K562 (cell line): ENCODE measurements at regions of chr9 and their contacts with region 1.

Region 1: DNA sequence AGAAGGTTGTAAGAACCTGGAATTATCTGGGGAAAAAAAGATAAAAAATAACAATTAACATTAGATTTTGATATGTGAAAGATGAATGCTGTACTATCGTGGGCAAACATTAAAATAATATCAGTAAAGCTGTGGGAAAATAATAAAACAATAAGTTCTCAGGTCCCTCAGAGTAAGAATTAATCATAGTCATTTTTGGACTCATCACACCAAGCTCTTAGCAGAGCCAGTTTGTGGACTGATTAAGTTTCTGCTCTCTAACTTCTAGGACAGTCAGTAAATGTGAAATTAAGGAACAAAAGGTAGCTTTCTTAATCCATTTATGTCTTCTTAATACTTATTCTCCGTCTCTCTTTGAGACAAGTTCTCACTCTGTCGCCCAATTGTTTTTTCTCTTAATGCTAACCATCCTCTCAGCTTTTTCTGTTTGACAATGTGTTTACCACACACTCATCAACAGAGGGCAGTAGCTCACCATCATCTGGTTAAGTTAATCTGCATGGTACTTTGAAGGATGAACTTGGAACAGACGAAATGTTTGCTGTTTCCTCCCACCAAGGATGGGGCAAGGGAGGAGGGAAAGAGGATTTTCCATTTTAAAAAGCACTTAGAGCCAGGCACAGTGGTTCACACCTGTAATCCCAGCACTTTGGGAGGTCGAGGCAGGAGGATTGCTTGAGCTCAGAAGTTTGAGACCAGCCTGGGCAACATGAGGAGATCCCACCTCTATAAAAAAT is 5.3 kb upstream of the ACO1 start:
- DNase-seq: peak; percentile 34 to 72 (median 45)
- ATAC-seq: peak; percentile 86
- H3K4me3 ChIP-seq: no peak overlapping the region
- H3K27ac ChIP-seq: no peak overlapping the region
- H3K4me1 ChIP-seq: no peaks in the 10 kb centered on the region
- H3K27me3 ChIP-seq: no peaks in the 10 kb centered on the region
- CTCF ChIP-seq: peak; percentile 66 to 85 (median 75)
- EP300 ChIP-seq: no peak
- POLR2A ChIP-seq: no peak
- RAD21 ChIP-seq: peak; percentile 80 to 92

Region 2: GRCh38 chr9:32395490-32396216 is 16.5 kb after region 1 on chr9:
- CTCF ChIA-PET with region 1: no interaction called
- POLR2A ChIA-PET with region 1: no interaction called
- in situ Hi-C with region 1: no loop called
- intact Hi-C with region 1: no loop called
- DNase-seq: no peak
- ATAC-seq: 0 out of 3 replicates have a peak, but pooled peaks have one; percentile 27
- H3K4me3 ChIP-seq: no peak overlapping the region
- H3K27ac ChIP-seq: no peak overlapping the region
- H3K4me1 ChIP-seq: no peaks in the 10 kb centered on the region; a peak in 1 of 5 replicates
- H3K27me3 ChIP-seq: no peaks in the 10 kb centered on the region
- CTCF ChIP-seq: no peak
- EP300 ChIP-seq: no peak
- POLR2A ChIP-seq: no peak
- RAD21 ChIP-seq: no peak

Region 3: DNA sequence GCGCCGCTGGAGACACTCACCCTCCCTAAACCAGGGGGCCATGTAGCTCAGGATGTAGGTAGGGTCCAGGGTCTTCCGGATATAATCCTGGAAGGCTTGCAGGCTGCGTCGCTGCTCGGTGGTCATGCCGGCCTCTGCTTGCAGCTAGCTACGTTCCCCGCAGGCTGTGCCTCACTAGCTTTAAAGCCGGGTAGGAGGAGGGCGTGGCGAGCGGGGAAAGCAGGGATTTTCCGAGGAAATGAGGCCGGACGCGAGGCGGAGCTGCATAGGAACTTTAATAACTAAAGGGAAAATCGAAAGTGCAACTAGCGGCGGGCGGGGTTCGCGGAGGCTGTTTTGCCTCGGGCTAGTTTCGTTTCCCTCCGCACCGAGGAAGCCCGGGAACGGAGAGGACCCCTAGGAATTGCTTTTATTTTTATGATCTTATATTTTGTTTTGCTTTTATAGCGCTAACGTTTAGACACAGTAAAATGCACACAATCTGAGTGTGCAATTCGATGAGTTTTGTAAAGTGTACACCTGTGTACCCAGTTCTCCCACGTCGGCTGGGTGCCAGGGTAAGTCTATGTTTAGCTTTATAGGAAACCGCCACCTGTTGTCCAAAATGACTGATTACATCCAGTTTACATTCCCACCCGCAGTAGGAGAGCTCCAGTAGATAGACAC is 147.0 kb after region 1 on chr9 and contains the start of gene RIGI:
- CTCF ChIA-PET with region 1: interaction called, 17 read pairs
- POLR2A ChIA-PET with region 1: interaction called, 4 read pairs
- in situ Hi-C with region 1: no loop called
- intact Hi-C with region 1: loop called (anchors 1 kb)
- DNase-seq: peak; percentile 33 to 69 (median 44)
- ATAC-seq: peak; percentile 94
- H3K4me3 ChIP-seq: peak within 1 kb of the TSS; percentile 54
- H3K27ac ChIP-seq: peak within 1 kb of the TSS; percentile 33; the same call in 2 of the 3 replicates
- H3K4me1 ChIP-seq: peaks cover 0 to 4% of the 10 kb centered on the region in 2 experiments; a peak in 1 of 5 replicates
- H3K27me3 ChIP-seq: no peaks in the 10 kb centered on the region
- CTCF ChIP-seq: peak; percentile 31 to 55 (median 53); a peak in 5 of 6 replicates
- EP300 ChIP-seq: no peak
- POLR2A ChIP-seq: no peak
- RAD21 ChIP-seq: peak; percentile 24 to 52; a peak in 2 of 4 replicates
- polyA plus RNA-seq, gene RIGI: 0.32 to 0.36 TPM

Region 4: GRCh38 chr9:32571969-32572899 is 193.1 kb after region 1 on chr9:
- CTCF ChIA-PET with region 1: interaction called, 34 read pairs
- POLR2A ChIA-PET with region 1: interaction called, 4 read pairs
- in situ Hi-C with region 1: loop called (anchors 5 kb)
- intact Hi-C with region 1: no loop called
- DNase-seq: peak; percentile 59 to 82 (median 68)
- ATAC-seq: peak; percentile 97
- H3K4me3 ChIP-seq: peak overlapping the region; percentile 78
- H3K27ac ChIP-seq: peak overlapping the region; percentile 69
- H3K4me1 ChIP-seq: no peaks in the 10 kb centered on the region
- H3K27me3 ChIP-seq: no peaks in the 10 kb centered on the region
- CTCF ChIP-seq: peak; percentile 68 to 72 (median 72)
- EP300 ChIP-seq: no peak
- POLR2A ChIP-seq: no peak
- RAD21 ChIP-seq: peak; percentile 50 to 68

Region 5: GRCh38 chr9:32579706-32580331 is 200.7 kb after region 1 on chr9:
- CTCF ChIA-PET with region 1: interaction called, 93 read pairs
- POLR2A ChIA-PET with region 1: interaction called, 5 read pairs
- in situ Hi-C with region 1: loop called (anchors 5 kb)
- intact Hi-C with region 1: loop called (anchors 1 kb)
- DNase-seq: peak; percentile 27 to 60 (median 40)
- ATAC-seq: peak; percentile 59; the same call in 1 of the 3 replicates
- H3K4me3 ChIP-seq: no peak overlapping the region
- H3K27ac ChIP-seq: no peak overlapping the region
- H3K4me1 ChIP-seq: no peaks in the 10 kb centered on the region; a peak in 1 of 5 replicates
- H3K27me3 ChIP-seq: no peaks in the 10 kb centered on the region
- CTCF ChIP-seq: peak; percentile 71 to 84 (median 75)
- EP300 ChIP-seq: no peak
- POLR2A ChIP-seq: no peak
- RAD21 ChIP-seq: peak; percentile 60 to 85

Region 6: GRCh38 chr9:32968101-32969011 is 589.2 kb after region 1 on chr9:
- CTCF ChIA-PET with region 1: interaction called, 15 read pairs
- POLR2A ChIA-PET with region 1: no interaction called
- in situ Hi-C with region 1: loop called (anchors 5 kb)
- intact Hi-C with region 1: loop called (anchors 1 kb)
- DNase-seq: peak; percentile 32 to 60 (median 35)
- ATAC-seq: peak; percentile 58; the same call in 1 of the 3 replicates
- H3K4me3 ChIP-seq: no peak overlapping the region
- H3K27ac ChIP-seq: no peak overlapping the region
- H3K4me1 ChIP-seq: no peaks in the 10 kb centered on the region
- H3K27me3 ChIP-seq: no peaks in the 10 kb centered on the region
- CTCF ChIP-seq: peak; percentile 40 to 77 (median 52); a peak in 5 of 6 replicates
- EP300 ChIP-seq: no peak
- POLR2A ChIP-seq: no peak
- RAD21 ChIP-seq: peak; percentile 82 to 84

Region 7: DNA sequence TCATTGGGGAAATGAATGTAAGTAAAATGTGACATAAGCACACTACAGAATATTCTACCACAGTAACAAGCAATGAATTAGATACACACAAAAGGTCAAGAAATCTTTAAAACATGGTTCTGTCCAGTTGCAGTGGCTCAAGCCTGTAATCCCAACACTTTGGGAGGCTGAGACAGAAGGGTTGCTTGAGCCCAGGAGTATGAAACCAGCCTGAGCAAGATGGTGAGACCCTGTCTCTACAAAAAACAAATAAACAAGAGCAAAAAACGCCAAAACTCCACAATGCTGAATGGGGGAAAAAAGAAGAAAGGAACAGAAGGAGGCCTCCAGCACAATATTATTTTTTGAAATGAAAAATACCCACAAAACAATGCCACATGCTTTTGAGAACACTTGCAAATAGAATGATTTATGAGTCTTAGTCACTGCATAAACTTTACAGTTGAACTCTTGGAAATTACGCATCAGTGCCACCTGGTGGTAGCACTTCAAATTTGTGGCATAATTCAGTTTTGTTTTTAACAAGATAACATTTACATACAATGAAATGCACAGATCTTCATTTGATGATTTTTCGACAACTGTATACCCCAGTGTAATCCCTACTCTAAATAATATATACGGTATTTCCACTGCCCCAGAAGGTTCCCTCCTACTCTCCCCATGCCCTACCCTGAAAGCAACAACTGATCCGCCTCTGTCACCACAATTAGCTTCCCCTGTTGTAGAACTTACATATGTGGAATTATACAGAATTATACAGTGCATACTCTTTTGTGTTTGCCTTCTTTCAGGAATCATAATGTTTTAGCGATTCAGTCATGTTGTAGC is 846.4 kb after region 1 on chr9:
- CTCF ChIA-PET with region 1: no interaction called
- POLR2A ChIA-PET with region 1: no interaction called
- in situ Hi-C with region 1: loop called (anchors 25 kb)
- intact Hi-C with region 1: no loop called
- DNase-seq: peak; percentile 26 to 76 (median 30)
- ATAC-seq: peak; percentile 59
- H3K4me3 ChIP-seq: no peak overlapping the region
- H3K27ac ChIP-seq: no peak overlapping the region
- H3K4me1 ChIP-seq: peaks cover 0 to 4% of the 10 kb centered on the region in 2 experiments; a peak in 3 of 5 replicates
- H3K27me3 ChIP-seq: no peaks in the 10 kb centered on the region
- CTCF ChIP-seq: peak; percentile 46 to 80 (median 64); a peak in 5 of 6 replicates
- EP300 ChIP-seq: peak; percentile 23; the same call in 1 of the 2 replicates
- POLR2A ChIP-seq: no peak
- RAD21 ChIP-seq: peak; percentile 85 to 95